CD4-positive, alpha-beta memory T cell (primary cell): ENCODE measurements at regions of chr1 and their contacts with region 1.

Region 1: DNA sequence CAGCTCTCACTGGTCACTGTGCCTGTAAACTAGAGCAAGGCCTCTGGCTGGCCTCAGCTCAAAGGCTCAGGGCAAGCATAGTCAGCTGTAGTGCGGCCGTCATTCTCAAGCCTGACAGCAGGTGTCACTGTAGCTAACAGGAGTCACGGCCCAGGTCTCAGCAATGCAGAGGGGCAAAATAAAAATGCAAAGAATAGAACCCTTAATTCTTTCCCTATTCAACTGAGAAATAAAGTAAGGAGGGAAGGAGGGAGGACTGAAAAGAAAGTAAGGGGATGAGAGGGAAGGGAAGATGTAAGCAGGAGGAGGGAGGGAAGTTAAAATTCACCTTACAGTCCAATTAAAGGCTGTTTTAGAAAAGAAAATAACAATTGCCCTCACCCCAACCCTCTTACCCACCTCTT is 106.1 kb downstream of the KIAA0319L start:
- DNase-seq: peak; percentile 66 to 75 (median 73)
- H3K4me3 ChIP-seq: no peak overlapping the region
- H3K4me3 Mint-ChIP-seq: peak overlapping the region in 5 of 8 donors; percentile 22 to 87 (median 42)
- H3K27ac ChIP-seq: no peak overlapping the region
- H3K27ac Mint-ChIP-seq: peak overlapping the region; percentile 50 to 95 (median 90)
- H3K4me1 ChIP-seq: peaks cover 26% of the 10 kb centered on the region
- H3K4me1 Mint-ChIP-seq: peaks cover 28 to 39% (median 32%) of the 10 kb centered on the region in 4 donors
- H3K27me3 ChIP-seq: no peaks in the 10 kb centered on the region
- H3K27me3 Mint-ChIP-seq: no peaks in the 10 kb centered on the region

Region 2: DNA sequence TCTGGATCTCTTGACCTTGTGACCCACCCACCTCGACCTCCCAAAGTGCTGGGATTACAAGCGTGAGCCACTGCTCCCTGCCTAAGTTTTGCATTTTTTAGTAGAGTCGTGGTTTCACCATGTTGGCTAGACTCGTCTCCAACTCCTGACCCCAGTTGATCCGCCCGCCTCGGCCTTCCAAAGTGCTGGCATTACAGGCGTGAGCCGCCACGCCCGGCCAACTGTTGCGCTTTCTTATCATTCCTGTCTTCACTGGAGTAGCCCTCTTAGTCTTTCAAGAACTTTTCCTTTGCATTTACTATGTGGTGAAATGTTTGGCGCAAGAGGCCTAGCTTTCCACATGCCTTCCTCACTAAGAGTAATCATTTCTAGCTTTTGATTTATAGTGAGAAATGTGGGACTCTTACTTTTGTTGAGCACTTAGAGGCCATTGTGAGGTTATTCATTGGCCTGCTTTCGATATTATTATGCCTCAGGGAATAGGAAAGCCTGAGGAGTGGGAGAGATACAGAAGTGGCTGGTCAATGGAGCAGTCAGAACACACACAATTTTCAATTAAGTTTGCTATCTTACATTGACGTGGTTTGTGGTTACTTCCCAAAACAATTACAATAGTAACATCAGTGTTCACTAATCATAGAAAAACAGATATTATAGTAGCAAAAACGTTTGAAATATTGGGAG is 71.7 kb before region 1 on chr1:
- CTCF ChIA-PET with region 1: no interaction called
- POLR2A ChIA-PET with region 1: no interaction called
- intact Hi-C with region 1: no loop called
- DNase-seq: no peak
- H3K4me3 ChIP-seq: no peak overlapping the region
- H3K4me3 Mint-ChIP-seq: no peak overlapping the region
- H3K27ac ChIP-seq: no peak overlapping the region
- H3K27ac Mint-ChIP-seq: peak overlapping the region in 1 of 7 donors; percentile 37
- H3K4me1 ChIP-seq: no peaks in the 10 kb centered on the region
- H3K4me1 Mint-ChIP-seq: no peaks in the 10 kb centered on the region
- H3K27me3 ChIP-seq: no peaks in the 10 kb centered on the region
- H3K27me3 Mint-ChIP-seq: no peaks in the 10 kb centered on the region

Region 3: DNA sequence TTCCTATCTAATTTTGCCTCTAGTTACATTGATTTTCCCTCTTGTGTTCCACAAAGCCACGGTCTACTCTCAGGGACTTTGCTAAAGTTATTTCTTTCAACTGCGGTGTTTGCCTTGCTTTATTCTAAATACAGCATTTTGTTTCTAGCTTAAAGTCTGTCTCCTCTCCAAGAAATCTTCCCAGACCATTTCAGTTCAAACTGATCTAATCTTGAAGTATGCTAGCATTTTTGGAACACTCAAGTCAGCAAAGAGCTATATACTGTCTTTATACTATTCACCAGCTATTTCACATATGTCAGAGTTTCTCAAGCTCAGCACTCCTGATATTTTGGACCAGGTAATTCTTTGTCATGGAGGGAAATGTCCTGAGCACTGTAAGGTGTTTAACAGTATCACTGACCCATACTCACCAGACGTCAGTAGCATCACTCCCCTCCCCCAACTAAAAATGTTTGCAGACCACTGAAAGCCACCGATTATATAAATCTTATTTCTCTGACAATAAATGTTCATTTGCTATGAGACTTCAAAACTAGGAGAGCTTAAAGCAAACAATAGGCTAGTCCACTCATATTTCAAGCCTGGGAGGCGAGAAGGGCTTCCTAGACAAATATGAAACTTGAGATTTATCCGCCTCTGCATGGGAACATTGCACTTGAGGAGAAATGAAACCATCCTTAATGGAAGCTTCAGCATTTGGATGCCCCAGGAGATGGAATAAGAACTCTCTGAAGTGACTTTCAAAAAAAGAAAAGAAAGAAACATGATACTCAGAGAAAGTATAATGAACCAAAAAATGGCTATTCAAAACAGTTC is 24.9 kb after region 1 on chr1:
- CTCF ChIA-PET with region 1: interaction called, 16 read pairs
- POLR2A ChIA-PET with region 1: no interaction called
- intact Hi-C with region 1: no loop called
- DNase-seq: no peak
- H3K4me3 ChIP-seq: no peak overlapping the region
- H3K4me3 Mint-ChIP-seq: no peak overlapping the region
- H3K27ac ChIP-seq: no peak overlapping the region
- H3K27ac Mint-ChIP-seq: peak overlapping the region in 2 of 7 donors; percentile 49 to 72
- H3K4me1 ChIP-seq: no peaks in the 10 kb centered on the region
- H3K4me1 Mint-ChIP-seq: peaks cover 0 to 8% (median 1%) of the 10 kb centered on the region in 4 donors
- H3K27me3 ChIP-seq: no peaks in the 10 kb centered on the region
- H3K27me3 Mint-ChIP-seq: no peaks in the 10 kb centered on the region

Region 4: DNA sequence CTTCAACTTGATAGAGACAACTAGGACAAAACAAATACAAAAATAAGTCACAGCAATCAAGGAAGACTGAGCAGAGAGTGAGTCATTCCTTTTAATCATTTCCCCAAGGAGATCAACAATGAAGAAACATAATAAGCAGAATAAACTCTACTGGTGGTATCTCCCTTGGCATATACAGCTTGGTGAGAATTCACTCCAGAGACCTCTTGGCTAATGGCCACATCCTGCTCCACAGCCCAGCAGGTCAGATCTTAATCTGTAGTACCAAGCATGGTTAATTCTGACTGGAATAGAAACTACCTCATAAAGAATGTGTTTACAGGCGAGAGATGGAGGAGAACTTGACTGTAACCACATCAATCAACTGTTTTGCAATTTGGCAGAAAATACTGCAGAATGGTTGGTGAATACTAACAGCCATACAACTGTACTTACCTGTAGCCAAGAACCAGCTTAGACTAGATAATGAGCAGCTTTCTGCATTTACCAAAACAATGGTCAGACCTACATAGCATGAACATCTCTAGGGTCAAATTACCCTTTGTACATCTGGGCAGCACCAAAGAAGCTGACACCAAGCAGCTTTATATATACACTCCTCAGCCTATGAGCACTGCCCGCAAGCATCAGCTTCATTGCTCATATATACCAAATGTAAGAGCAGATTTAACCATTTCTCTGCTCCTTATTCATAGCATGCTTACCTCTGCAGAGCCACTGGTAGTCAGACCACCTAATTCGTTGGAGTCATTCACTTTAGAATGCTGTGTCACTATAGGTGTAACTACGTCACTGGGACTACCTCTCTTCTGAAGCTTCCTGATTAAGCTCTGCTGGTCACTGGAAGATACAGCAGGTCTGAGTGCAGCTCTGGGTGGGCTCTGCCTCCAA is 55.0 kb after region 1 on chr1:
- CTCF ChIA-PET with region 1: interaction called, 82 read pairs
- POLR2A ChIA-PET with region 1: interaction called, 51 read pairs
- intact Hi-C with region 1: loop called (anchors 1 kb)
- DNase-seq: peak; percentile 78 to 89 (median 82)
- H3K4me3 ChIP-seq: peak overlapping the region in 1 of 2 donors; percentile 39
- H3K4me3 Mint-ChIP-seq: peak overlapping the region; percentile 65 to 88 (median 76)
- H3K27ac ChIP-seq: peak overlapping the region; percentile 59
- H3K27ac Mint-ChIP-seq: peak overlapping the region; percentile 86 to 98 (median 96)
- H3K4me1 ChIP-seq: peaks cover 65% of the 10 kb centered on the region
- H3K4me1 Mint-ChIP-seq: peaks cover 63 to 89% (median 73%) of the 10 kb centered on the region in 4 donors
- H3K27me3 ChIP-seq: no peaks in the 10 kb centered on the region
- H3K27me3 Mint-ChIP-seq: no peaks in the 10 kb centered on the region

Region 5: DNA sequence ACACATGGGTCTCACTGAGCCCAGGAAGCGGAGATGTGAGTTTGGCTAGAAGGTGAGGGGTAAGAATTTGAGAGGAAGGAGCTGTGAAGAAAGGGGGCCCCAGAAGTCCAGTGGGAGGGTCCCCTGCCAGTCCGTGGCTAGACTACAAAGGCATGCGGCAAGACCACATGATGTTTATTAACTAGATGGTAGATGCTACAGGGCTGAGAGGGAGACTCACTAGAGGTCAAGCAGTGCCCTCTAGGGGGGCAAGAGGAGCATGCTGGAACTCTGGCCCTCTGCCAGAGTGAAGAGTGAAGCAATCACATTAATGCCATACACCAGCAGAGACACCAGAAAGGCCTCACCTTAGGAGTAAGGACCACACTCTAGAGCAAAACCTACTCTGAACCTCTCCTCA is 93.9 kb after region 1 on chr1:
- CTCF ChIA-PET with region 1: interaction called, 195 read pairs
- POLR2A ChIA-PET with region 1: interaction called, 10 read pairs
- intact Hi-C with region 1: loop called (anchors 1 kb)
- DNase-seq: peak; percentile 65 to 68 (median 67)
- H3K4me3 ChIP-seq: no peak overlapping the region
- H3K4me3 Mint-ChIP-seq: peak overlapping the region in 1 of 8 donors; percentile 30
- H3K27ac ChIP-seq: no peak overlapping the region
- H3K27ac Mint-ChIP-seq: peak overlapping the region; percentile 22 to 89 (median 60)
- H3K4me1 ChIP-seq: peaks cover 37% of the 10 kb centered on the region
- H3K4me1 Mint-ChIP-seq: peaks cover 42 to 82% (median 67%) of the 10 kb centered on the region in 4 donors
- H3K27me3 ChIP-seq: no peaks in the 10 kb centered on the region
- H3K27me3 Mint-ChIP-seq: no peaks in the 10 kb centered on the region

Region 6: DNA sequence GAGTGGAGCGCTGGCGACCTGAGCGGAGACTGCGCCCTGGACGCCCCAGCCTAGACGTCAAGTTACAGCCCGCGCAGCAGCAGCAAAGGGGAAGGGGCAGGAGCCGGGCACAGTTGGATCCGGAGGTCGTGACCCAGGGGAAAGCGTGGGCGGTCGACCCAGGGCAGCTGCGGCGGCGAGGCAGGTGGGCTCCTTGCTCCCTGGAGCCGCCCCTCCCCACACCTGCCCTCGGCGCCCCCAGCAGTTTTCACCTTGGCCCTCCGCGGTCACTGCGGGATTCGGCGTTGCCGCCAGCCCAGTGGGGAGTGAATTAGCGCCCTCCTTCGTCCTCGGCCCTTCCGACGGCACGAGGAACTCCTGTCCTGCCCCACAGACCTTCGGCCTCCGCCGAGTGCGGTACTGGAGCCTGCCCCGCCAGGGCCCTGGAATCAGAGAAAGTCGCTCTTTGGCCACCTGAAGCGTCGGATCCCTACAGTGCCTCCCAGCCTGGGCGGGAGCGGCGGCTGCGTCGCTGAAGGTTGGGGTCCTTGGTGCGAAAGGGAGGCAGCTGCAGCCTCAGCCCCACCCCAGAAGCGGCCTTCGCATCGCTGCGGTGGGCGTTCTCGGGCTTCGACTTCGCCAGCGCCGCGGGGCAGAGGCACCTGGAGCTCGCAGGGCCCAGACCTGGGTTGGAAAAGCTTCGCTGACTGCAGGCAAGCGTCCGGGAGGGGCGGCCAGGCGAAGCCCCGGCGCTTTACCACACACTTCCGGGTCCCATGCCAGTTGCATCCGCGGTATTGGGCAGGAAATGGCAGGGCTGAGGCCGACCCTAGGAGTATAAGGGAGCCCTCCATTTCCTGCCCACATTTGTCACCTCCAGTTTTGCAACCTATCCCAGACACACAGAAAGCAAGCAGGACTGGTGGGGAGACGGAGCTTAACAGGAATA is 126.2 kb after region 1 on chr1:
- CTCF ChIA-PET with region 1: interaction called, 24 read pairs
- POLR2A ChIA-PET with region 1: interaction called, 3 read pairs
- intact Hi-C with region 1: no loop called
- DNase-seq: peak; percentile 61 to 76 (median 71)
- H3K4me3 ChIP-seq: peak overlapping the region; percentile 42 to 50
- H3K4me3 Mint-ChIP-seq: peak overlapping the region; percentile 82 to 96 (median 88)
- H3K27ac ChIP-seq: peak overlapping the region; percentile 58
- H3K27ac Mint-ChIP-seq: peak overlapping the region; percentile 32 to 93 (median 77)
- H3K4me1 ChIP-seq: peaks cover 28% of the 10 kb centered on the region
- H3K4me1 Mint-ChIP-seq: peaks cover 10 to 31% (median 20%) of the 10 kb centered on the region in 4 donors
- H3K27me3 ChIP-seq: no peaks in the 10 kb centered on the region
- H3K27me3 Mint-ChIP-seq: peaks cover 1 to 2% of the 10 kb centered on the region in 2 donors

Region 7: DNA sequence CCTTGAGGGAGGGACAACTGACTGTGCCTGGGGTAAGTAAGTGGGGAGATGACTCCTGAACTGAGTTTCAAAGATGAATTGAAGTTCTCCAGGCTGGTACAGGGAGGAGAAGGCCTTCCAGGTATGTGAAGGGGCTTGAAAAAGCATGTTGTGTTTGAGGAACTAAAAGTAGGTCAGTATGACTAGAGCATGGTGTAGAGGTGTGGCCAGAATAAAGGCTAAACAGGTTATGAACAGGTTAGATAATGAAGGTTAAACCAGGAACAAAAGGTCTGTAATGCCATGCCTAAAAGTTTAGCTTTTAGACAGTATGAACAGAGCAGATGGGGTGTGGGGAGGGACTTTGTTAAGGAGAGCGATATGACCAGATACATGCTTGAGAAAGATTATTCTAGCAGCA is 326.0 kb after region 1 on chr1:
- CTCF ChIA-PET with region 1: interaction called, 9 read pairs
- POLR2A ChIA-PET with region 1: no interaction called
- intact Hi-C with region 1: loop called (anchors 1 kb)
- DNase-seq: peak in 2 of 5 donors; percentile 6 to 8
- H3K4me3 ChIP-seq: no peak overlapping the region
- H3K4me3 Mint-ChIP-seq: peak overlapping the region in 5 of 8 donors; percentile 2 to 26 (median 15)
- H3K27ac ChIP-seq: no peak overlapping the region
- H3K27ac Mint-ChIP-seq: peak overlapping the region; percentile 27 to 88 (median 81)
- H3K4me1 ChIP-seq: peaks cover 24% of the 10 kb centered on the region
- H3K4me1 Mint-ChIP-seq: peaks cover 11 to 32% (median 15%) of the 10 kb centered on the region in 4 donors
- H3K27me3 ChIP-seq: no peaks in the 10 kb centered on the region
- H3K27me3 Mint-ChIP-seq: no peaks in the 10 kb centered on the region